Activated naive CD4-positive, alpha-beta T cell treated with anti-CD3 and anti-CD28 coated beads, Interleukin-2, amount 10 ng/mL, durations not matched to agents 7 days and 5 days (primary cell): ENCODE measurements at regions of chr7 and their contacts with region 1.

Region 1: DNA sequence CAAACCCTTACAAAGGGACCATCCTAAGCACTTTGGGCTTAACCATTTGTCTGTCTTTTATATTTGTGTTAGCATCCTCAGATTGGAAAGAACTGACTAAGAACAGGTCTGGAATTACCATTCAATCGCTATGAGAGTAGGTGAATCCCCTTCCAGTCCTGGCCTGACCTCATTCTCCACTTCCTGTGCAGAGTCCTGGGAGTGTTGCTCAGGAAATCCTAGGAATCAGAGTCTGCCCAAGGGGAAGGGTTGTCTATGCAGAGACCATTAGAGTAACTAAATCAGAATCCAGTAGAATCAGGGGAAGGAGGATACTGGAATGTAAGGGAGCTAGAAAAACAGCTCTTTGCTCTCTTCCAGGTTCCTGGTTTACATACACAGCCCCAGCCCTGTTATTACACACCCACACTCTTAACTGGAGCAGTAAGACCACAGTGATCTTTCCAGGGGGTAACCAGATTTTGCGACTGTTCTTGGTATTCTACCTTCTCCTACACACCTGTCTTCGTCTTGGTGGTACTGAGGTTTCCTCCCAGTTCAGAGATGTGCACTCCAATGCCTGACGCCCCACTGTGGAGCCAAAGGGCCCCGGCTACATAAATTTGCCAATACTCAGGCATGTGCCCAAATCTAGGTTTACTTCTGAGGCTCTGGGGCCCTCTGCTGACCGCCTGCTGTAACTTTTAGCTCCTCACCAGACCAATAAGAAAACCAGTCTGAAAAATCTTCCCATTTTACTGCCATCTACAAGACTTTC is 103.7 kb downstream of the RNF216 start:
- DNase-seq: peak; percentile 67
- H3K4me3 Mint-ChIP-seq: no peak overlapping the region
- H3K27ac Mint-ChIP-seq: no peak overlapping the region
- H3K4me1 Mint-ChIP-seq: peaks cover 27% of the 10 kb centered on the region
- H3K27me3 Mint-ChIP-seq: no peaks in the 10 kb centered on the region

Region 2: GRCh38 chr7:5494683-5495561 is 182.8 kb before region 1 on chr7:
- CTCF ChIA-PET with region 1: interaction called, 18 read pairs
- DNase-seq: peak; percentile 87
- H3K4me3 Mint-ChIP-seq: no peak overlapping the region
- H3K27ac Mint-ChIP-seq: peak overlapping the region; percentile 33
- H3K4me1 Mint-ChIP-seq: peaks cover 40% of the 10 kb centered on the region
- H3K27me3 Mint-ChIP-seq: no peaks in the 10 kb centered on the region

Region 3: GRCh38 chr7:5526100-5526905 is 151.4 kb before region 1 on chr7:
- CTCF ChIA-PET with region 1: no interaction called
- DNase-seq: peak; percentile 37
- H3K4me3 Mint-ChIP-seq: peak overlapping the region; percentile 95
- H3K27ac Mint-ChIP-seq: peak overlapping the region; percentile 92
- H3K4me1 Mint-ChIP-seq: peaks cover 31% of the 10 kb centered on the region
- H3K27me3 Mint-ChIP-seq: peaks cover 20% of the 10 kb centered on the region

Region 4: GRCh38 chr7:5665094-5666025 is 12.4 kb before region 1 on chr7:
- CTCF ChIA-PET with region 1: interaction called, 46 read pairs
- DNase-seq: peak; percentile 78
- H3K4me3 Mint-ChIP-seq: no peak overlapping the region
- H3K27ac Mint-ChIP-seq: no peak overlapping the region
- H3K4me1 Mint-ChIP-seq: peaks cover 19% of the 10 kb centered on the region
- H3K27me3 Mint-ChIP-seq: no peaks in the 10 kb centered on the region

Region 5: GRCh38 chr7:5694912-5695726 is 17.4 kb after region 1 on chr7:
- CTCF ChIA-PET with region 1: interaction called, 63 read pairs
- DNase-seq: peak; percentile 83
- H3K4me3 Mint-ChIP-seq: peak overlapping the region; percentile 82
- H3K27ac Mint-ChIP-seq: peak overlapping the region; percentile 95
- H3K4me1 Mint-ChIP-seq: peaks cover 99% of the 10 kb centered on the region
- H3K27me3 Mint-ChIP-seq: peaks cover 6% of the 10 kb centered on the region